Motor neuron (in vitro differentiated cells): ENCODE measurements at regions of chr2 and their contacts with region 1.

Region 1: DNA sequence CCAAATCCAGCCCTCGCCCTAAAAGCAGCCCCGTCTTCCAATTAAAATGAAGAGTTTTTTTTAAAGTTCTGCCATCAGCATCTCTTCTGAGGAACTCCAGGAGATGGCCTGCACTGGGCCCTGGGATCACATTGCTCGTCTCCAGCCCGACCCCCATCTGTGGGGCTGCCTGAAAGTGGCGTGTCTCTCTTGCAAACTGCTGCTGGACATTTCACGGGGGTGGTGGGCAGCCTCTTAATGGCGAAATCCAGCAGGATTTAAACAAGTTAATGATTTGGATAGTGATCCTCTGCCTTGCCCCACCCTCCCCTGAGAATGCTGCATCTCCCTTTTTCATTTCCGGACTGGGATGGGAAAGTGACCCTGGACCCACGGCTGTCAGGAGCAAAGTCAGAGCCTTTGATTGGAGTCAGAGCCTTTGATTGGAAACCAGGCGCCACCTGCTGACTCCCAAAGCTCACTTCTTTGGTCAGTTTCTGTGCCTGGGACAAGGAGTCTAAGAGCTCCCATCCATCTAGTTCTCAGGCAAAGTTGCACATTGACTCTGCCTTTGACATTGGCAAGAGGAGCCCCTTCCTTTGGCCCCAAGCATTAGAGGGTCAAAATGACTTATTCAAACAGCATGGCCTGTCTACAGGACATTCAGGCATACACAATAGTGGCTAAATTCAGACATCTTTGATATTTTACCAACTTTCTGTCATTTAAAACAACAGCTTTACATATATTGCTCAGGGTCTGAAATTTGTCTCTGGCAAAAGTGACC is 155.2 kb downstream of the SH3BP4 start:
- ATAC-seq: peak; percentile 73 to 93 (median 86)
- H3K4me3 ChIP-seq: no peak overlapping the region
- H3K27ac ChIP-seq: no peak overlapping the region
- H3K4me1 ChIP-seq: peaks cover 7 to 12% of the 10 kb centered on the region in 2 donors

Region 2: GRCh38 chr2:233976690-233977294 is 1130.3 kb before region 1 on chr2:
- in situ Hi-C with region 1: loop called in 4 of 9 experiments (anchors 25 kb)
- ATAC-seq: peak; percentile 6 to 75 (median 66)
- H3K4me3 ChIP-seq: no peak overlapping the region
- H3K27ac ChIP-seq: no peak overlapping the region
- H3K4me1 ChIP-seq: peaks cover 12 to 15% of the 10 kb centered on the region in 2 donors

Region 3: DNA sequence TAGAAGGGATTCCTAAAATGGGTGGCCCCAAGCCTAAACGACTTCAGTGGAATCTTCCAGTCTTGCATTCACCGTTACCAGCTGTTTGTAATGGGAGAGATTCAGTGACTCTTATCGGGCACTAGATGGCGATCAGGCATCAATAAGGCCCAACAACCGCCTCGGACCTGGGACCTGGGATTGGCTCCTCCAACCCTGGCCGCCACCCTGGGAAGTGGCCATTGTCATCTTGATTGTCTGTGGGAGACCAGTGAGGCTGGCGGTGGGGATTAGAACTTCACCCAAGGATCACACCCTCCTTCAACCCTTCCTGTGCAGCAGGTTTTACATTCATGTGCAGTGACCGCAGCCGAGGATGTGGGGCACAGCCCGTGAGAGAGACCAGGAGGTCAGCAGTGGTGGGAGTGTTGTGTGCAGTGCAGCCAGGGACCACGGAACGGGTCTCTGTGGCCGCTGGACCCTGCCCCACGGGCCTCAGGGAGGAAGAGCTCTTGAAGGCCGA is 971.3 kb before region 1 on chr2:
- in situ Hi-C with region 1: loop called in 5 of 9 experiments (anchors 25 kb)
- ATAC-seq: peak; percentile 91 to 98 (median 94)
- H3K4me3 ChIP-seq: no peak overlapping the region
- H3K27ac ChIP-seq: no peak overlapping the region
- H3K4me1 ChIP-seq: peaks cover 10 to 11% of the 10 kb centered on the region in 2 donors

Region 4: GRCh38 chr2:234288974-234289455 is 818.0 kb before region 1 on chr2:
- in situ Hi-C with region 1: loop called in 1 of 9 experiments (anchors 25 kb)
- ATAC-seq: peak in 5 of 8 experiments; percentile 5 to 65 (median 17)
- H3K4me3 ChIP-seq: no peak overlapping the region
- H3K27ac ChIP-seq: no peak overlapping the region
- H3K4me1 ChIP-seq: peaks cover 17 to 29% of the 10 kb centered on the region in 2 donors

Region 5: DNA sequence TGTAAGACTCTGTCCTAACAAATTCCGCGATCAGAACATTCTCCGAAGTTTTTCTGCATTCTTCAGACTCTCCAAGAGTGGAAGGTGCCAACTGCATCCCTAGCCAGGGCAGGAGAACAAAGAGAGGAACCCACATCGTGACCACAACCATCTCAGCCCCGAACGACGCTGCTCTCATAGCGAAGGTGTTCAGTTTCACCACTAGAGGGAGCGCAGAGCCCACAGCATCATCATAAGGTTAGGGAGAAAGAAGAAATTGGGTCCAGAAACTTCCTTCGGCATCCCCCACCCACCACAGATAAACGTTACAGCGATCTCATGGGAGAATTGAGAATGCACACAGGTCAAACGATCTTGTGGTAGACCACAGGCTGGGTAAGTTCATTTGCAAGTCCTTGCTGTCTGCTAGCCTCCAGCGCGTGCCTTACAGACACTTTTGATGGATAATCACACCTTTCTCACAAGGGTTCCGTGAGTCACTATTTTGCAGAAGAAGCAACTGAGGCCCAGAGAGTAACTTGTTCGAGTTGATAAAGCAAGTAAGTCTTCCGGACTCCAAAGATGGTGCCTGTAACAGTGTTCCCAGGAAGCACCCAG is 556.4 kb before region 1 on chr2:
- in situ Hi-C with region 1: loop called (anchors 10 to 25 kb)
- ATAC-seq: peak; percentile 36 to 93 (median 44)
- H3K4me3 ChIP-seq: no peak overlapping the region
- H3K27ac ChIP-seq: no peak overlapping the region
- H3K4me1 ChIP-seq: peaks cover 21 to 31% of the 10 kb centered on the region in 2 donors

Region 6: DNA sequence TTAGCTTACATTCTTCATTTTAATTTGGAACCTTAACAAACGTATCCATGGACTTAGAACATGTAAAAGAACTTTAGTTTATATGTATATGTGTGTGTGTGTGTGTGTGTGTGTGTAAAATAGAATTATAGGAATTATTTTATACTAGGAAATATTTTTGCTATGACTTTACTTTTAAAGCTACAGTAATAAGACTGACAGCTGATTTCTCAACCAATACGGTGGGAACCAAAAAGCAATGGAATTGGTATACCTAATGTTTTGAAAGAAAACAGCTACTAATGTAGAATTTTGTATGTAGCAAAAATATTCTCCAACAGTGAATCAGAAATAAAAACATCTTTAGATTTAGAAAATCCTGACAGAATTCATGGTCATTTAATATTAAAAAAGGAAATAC is 463.6 kb before region 1 on chr2:
- in situ Hi-C with region 1: no loop called
- ATAC-seq: no peak
- H3K4me3 ChIP-seq: no peak overlapping the region
- H3K27ac ChIP-seq: no peak overlapping the region
- H3K4me1 ChIP-seq: no peaks in the 10 kb centered on the region

Region 7: GRCh38 chr2:234763002-234763873 is 343.8 kb before region 1 on chr2:
- in situ Hi-C with region 1: no loop called
- ATAC-seq: peak in 3 of 8 experiments; percentile 72 to 97 (median 96)
- H3K4me3 ChIP-seq: no peak overlapping the region
- H3K27ac ChIP-seq: no peak overlapping the region
- H3K4me1 ChIP-seq: peaks cover 2 to 14% of the 10 kb centered on the region in 2 donors

Region 8: DNA sequence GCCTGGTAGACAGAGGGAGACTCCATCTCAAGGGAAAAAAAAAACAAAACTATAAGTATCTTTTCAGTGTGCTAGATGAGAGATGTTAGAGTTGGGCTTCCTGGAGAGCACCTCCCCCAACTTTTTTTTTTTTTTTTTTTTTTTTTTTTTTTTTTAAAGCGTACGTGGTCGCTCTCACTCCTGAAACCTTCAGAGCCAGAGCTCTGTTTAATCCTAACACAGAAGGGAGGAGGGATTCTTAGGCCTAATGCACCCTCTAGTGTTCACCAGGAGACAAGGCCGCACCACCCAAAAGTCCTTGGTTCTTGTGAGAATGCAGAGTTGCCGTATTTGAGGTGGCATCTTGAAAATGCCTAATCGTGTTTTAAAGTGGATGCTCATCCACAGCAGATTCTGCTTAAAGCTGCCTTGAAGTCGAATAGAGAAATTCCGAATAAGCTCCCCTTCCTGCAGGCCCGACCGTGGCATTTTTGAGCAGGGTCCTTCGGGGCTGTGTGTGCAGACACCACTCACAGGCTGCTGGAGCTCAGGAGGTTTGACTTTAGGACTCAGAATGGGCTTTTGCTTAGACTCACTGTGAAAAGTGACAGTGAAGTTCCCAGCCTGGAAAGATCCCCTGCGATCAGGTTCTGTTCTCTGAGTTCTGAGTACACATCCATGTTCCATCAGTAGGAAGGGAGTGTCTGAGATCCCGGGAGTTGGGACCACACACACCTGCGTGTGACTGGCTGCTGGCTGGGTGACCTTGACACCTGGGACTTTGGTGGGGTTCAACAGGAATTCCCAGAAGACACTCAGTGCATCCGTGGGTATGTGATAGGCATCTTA is 639.4 kb after region 1 on chr2:
- in situ Hi-C with region 1: no loop called
- ATAC-seq: peak; percentile 82 to 97 (median 94)
- H3K4me3 ChIP-seq: no peak overlapping the region
- H3K27ac ChIP-seq: no peak overlapping the region
- H3K4me1 ChIP-seq: no peaks in the 10 kb centered on the region

Region 9: GRCh38 chr2:235908826-235909225 is 801.8 kb after region 1 on chr2:
- in situ Hi-C with region 1: no loop called
- ATAC-seq: no peak
- H3K4me3 ChIP-seq: no peak overlapping the region
- H3K27ac ChIP-seq: no peak overlapping the region
- H3K4me1 ChIP-seq: peaks cover 0 to 6% of the 10 kb centered on the region in 2 donors